ENCODE measurements at regions of chr12 and their contacts with region 1.

Region 1: DNA sequence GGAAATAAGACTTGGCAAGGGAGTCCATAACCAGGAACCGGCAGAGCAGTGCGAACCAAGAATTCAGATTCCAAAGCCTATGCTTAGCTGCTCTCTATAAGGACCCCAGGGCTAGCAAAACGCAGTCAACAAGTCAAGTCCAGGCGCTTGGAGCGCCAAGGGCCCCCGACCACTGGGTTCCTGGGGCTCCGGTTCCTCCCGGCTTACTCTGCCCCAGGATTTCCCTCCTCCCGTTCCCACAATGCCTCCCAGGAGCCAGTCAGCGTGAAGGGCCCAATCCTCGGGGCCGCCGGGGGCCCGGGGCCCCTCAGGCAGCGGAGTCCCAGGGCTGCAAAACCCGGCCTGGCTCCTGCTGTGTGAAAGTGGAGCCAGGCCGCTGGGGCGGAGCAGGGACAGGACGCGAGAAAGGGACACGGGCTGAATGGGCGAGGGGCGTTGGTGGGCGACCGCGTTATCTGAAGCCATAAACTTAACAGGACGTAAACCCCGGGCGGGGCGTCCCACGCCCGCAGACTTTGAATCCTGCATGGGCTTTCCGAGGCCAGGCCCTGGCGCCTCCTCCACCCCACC is 1.5 kb downstream of the KRT8 start:
- DNase-seq: peak; percentile 75
- H3K4me3 ChIP-seq: peak overlapping the region in 2 of 3 experiments; percentile 13 to 44
- H3K27ac ChIP-seq: peak overlapping the region; percentile 69
- H3K4me1 ChIP-seq: peaks cover 10% of the 10 kb centered on the region
- H3K27me3 ChIP-seq: no peaks in the 10 kb centered on the region
- CTCF ChIP-seq: no peak
- POLR2A ChIP-seq: no peak

Region 2: DNA sequence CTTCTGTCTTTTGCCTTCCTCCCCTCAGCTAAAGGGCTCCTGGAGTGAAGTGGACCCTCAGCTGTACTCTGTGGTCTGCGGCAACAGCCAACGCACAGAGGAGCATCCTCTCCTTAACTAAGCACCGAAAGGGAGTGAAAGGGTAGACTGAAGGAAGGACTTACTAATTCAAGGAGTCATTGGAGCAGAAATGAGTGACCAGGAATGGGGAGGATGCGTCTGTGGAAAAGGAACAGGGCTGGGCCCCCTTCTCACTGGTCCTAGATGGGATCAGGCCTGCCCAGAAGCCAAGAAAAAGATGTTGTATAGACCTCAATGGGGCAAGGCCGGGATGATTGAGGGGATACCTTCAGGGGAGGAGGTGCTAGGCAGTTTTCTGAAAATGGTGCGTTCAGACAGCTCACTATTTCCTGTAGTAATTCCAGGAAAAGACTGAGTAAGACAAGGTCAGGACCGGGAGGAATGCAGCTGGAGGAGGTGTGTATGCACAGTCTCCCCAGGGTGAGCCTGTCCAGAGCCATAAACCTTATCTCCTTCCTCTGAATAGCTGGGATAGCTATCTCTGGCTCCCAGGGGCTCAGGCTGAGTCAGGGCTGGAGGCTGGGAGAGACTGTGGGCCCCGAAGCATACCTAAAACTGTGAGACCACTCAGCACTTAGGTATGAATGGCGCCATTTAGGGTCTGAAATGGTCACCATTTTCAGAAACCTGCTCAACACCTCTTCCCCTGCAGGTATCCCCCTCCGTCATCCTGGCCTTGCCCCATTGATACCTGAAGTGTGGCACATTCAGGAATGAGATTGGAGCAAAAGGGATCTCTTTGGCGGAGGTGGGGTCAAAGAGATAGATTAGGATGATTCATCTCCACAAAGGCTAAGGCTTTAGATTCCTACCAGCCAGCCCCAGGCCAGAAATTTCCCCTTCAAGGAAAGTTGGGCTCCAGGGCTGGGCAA is 21.7 kb after region 1 on chr12:
- CTCF ChIA-PET with region 1: interaction called, 4 read pairs
- POLR2A ChIA-PET with region 1: no interaction called
- dilution Hi-C with region 1: no loop called
- intact Hi-C with region 1: loop called (anchors 1 kb)
- DNase-seq: peak; percentile 91
- H3K4me3 ChIP-seq: no peak overlapping the region
- H3K27ac ChIP-seq: peak overlapping the region; percentile 96
- H3K4me1 ChIP-seq: peaks cover 42% of the 10 kb centered on the region
- H3K27me3 ChIP-seq: no peaks in the 10 kb centered on the region
- CTCF ChIP-seq: no peak
- POLR2A ChIP-seq: peak; percentile 76

Region 3: DNA sequence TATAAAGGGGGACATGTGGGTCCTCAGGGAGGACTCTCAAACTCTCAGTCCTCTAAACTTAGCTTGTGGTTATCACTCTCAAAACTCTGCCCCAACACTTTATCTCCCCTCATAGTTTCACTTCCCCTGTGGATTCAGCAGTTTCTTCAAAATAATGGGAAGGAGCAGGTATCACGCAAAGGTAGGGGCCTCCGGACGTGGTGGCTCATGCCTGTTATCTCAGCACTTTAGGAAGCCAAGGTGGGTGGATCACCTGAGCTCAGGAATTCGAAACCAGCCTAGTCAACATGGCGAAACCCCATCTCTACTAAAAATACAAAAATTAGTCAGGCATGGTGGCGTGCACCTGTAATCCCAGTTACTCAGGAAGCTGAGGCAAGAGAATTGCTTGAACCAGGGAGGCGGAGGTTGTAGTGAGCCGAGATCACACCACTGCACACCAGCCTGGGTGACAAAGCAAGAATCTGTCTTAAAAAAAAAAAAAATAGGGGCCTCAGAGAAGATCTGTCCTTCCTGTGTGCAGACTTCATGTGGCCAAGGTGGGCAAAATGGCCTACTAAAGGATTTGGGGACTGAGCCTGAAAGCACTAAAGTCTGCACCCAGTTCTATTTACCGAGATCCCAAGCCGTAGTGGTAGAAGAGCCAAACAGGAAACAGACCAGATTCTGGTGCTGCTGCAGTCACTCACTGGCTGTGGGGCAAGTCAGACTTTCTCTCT is 297.2 kb after region 1 on chr12:
- CTCF ChIA-PET with region 1: no interaction called
- POLR2A ChIA-PET with region 1: no interaction called
- dilution Hi-C with region 1: no loop called
- intact Hi-C with region 1: no loop called
- DNase-seq: no peak
- H3K4me3 ChIP-seq: no peak overlapping the region
- H3K27ac ChIP-seq: no peak overlapping the region
- H3K4me1 ChIP-seq: peaks cover 6% of the 10 kb centered on the region
- H3K27me3 ChIP-seq: peaks cover 0 to 2% of the 10 kb centered on the region in 2 experiments
- CTCF ChIP-seq: no peak
- POLR2A ChIP-seq: no peak

Measured in endothelial cell of umbilical vein (primary cell).